ENCODE measurements at regions of chr1 and their contacts with region 1.

Region 1: DNA sequence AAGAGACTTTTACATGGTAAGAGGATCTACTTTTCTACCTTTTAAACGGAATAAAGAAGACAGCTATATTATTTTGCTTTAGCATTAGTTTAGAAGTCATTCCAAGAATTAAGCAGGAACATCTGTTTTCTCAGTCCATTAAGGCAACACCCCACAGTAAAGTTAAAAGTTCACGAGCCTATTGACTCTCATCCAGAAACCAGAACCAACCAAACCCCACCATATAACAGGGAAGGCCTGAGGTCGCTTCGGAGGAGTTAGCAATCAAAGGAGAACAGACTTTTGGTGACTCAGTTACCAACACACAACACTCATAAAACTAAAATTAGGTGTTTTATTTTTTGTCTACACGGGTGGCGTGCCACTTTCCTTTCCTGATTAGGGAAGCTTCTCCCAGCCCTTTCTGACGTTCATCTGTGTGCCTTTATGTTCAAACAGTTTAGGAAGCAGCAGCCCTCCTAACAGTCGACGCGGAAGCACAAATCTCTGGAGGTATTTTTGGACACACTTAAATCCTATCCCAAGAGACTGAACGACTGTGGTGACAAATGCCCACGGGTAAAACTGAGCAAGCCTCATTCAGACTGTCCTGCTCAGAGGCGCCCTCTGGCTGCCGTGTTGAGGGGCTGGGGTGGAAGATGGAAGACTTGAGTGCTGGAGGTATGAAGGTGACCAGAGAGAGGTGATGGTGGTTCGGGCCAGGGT is 8.6 kb upstream of the PLA2G2C start:
- DNase-seq: peak; percentile 13
- ATAC-seq: peak; percentile 91
- H3K4me3 ChIP-seq: no peak overlapping the region
- H3K27ac ChIP-seq: no peak overlapping the region
- H3K4me1 ChIP-seq: no peaks in the 10 kb centered on the region
- H3K27me3 ChIP-seq: peaks cover 0 to 5% of the 10 kb centered on the region in 2 experiments; a peak in 2 of 4 replicates
- CTCF ChIP-seq: peak; percentile 80 to 98 (median 93)
- EP300 ChIP-seq: no peak
- POLR2A ChIP-seq: no peak
- RAD21 ChIP-seq: peak; percentile 78

Region 2: DNA sequence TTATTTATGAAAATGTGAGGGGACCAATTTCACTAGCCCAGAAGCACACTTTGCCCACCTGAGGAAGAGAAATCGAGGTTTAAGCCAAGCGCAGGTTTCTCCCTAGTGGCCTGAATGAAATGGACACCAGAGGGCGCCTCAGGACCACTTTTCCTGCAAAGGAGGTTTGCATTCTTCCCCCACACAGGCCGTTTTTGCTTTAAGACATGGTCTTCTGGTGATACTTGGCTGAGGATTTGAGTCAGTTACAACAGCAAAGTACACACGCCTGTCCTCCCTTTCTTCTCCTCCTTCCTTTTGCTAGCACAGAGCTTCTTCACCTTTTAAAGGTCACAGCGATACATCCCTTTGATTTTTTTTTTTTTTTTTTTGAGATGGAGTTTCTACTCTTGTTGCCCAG is 276.9 kb before region 1 on chr1:
- CTCF ChIA-PET with region 1: interaction called, 52 read pairs
- POLR2A ChIA-PET with region 1: no interaction called
- RAD21 ChIA-PET with region 1: interaction called, 5 read pairs
- SMC1A ChIA-PET with region 1: interaction called, 7 read pairs
- in situ Hi-C with region 1: loop called (anchors 5 kb)
- intact Hi-C with region 1: loop called (anchors 1 kb)
- DNase-seq: peak; percentile 33
- ATAC-seq: peak; percentile 94
- H3K4me3 ChIP-seq: no peak overlapping the region
- H3K27ac ChIP-seq: no peak overlapping the region
- H3K4me1 ChIP-seq: no peaks in the 10 kb centered on the region
- H3K27me3 ChIP-seq: no peaks in the 10 kb centered on the region
- CTCF ChIP-seq: peak; percentile 80 to 98 (median 91); a peak in 5 of 6 replicates
- EP300 ChIP-seq: no peak
- POLR2A ChIP-seq: no peak
- RAD21 ChIP-seq: peak; percentile 98

Region 3: DNA sequence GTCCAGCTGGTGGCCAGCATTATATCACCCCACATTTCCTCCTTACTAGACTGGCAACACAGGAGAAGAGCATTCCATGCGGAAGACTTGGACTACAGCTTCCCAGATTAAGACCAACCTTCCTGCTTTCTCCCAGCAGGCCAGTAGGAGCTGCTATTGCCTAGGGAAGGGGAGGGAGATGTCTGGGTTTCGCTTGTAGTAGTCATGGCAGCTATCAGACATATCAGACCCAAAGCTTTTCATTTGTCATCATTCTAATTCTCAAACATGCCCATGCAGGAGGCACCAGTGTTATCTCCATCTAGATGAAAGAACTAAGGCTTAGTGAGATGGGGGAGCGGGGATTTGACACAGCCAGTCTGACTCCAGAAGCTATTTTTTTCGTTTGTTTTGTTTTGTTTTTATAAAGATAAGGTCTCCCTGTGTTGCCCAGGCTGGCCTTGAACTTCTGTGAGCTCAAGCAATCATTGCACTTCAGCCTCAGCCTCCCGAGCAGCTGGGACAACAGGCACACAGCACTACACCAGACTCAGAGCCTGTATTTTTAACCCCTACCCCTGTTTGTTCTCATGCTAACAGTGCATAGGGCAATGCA is 220.0 kb before region 1 on chr1:
- CTCF ChIA-PET with region 1: interaction called, 3 read pairs
- POLR2A ChIA-PET with region 1: no interaction called
- RAD21 ChIA-PET with region 1: no interaction called
- SMC1A ChIA-PET with region 1: interaction called, 5 read pairs
- in situ Hi-C with region 1: no loop called
- intact Hi-C with region 1: loop called (anchors 10 kb)
- DNase-seq: no peak
- ATAC-seq: no peak
- H3K4me3 ChIP-seq: no peak overlapping the region
- H3K27ac ChIP-seq: no peak overlapping the region
- H3K4me1 ChIP-seq: no peaks in the 10 kb centered on the region
- H3K27me3 ChIP-seq: no peaks in the 10 kb centered on the region; a peak in 1 of 4 replicates
- CTCF ChIP-seq: peak; percentile 71 to 77 (median 73)
- EP300 ChIP-seq: no peak
- POLR2A ChIP-seq: no peak
- RAD21 ChIP-seq: peak; percentile 92

Region 4: GRCh38 chr1:20100632-20101355 is 94.1 kb before region 1 on chr1:
- CTCF ChIA-PET with region 1: interaction called, 32 read pairs
- POLR2A ChIA-PET with region 1: no interaction called
- RAD21 ChIA-PET with region 1: interaction called, 6 read pairs
- SMC1A ChIA-PET with region 1: interaction called, 12 read pairs
- in situ Hi-C with region 1: no loop called
- intact Hi-C with region 1: loop called (anchors 1 kb)
- DNase-seq: no peak
- ATAC-seq: peak; percentile 97
- H3K4me3 ChIP-seq: no peak overlapping the region
- H3K27ac ChIP-seq: no peak overlapping the region
- H3K4me1 ChIP-seq: no peaks in the 10 kb centered on the region
- H3K27me3 ChIP-seq: no peaks in the 10 kb centered on the region
- CTCF ChIP-seq: peak; percentile 84 to 90 (median 86)
- EP300 ChIP-seq: no peak
- POLR2A ChIP-seq: no peak
- RAD21 ChIP-seq: peak; percentile 94

Region 5: DNA sequence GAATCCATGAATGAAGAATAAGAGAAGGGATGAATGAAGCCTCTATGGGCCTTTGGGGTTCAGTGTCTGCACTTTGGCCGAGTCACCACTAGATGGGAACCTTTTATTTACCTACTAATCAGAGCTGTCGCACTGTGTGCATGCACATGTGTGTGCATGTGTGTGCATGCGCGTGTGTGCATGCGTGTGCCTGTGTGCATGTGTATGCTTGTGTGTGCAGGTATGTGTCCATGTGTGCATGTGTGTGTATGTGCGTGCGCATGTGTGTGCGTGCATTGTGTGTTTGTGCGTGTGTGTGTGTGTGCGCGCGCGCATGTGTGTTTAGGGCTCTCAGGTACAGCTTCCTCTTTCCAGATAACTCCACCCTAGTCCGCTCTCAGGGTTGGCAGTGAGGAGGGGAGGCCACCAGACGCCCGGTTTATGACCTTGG is 29.4 kb before region 1 on chr1:
- CTCF ChIA-PET with region 1: interaction called, 10 read pairs
- POLR2A ChIA-PET with region 1: no interaction called
- RAD21 ChIA-PET with region 1: no interaction called
- SMC1A ChIA-PET with region 1: interaction called, 8 read pairs
- in situ Hi-C with region 1: no loop called
- intact Hi-C with region 1: loop called (anchors 1 kb)
- DNase-seq: no peak
- ATAC-seq: peak; percentile 72
- H3K4me3 ChIP-seq: no peak overlapping the region
- H3K27ac ChIP-seq: no peak overlapping the region
- H3K4me1 ChIP-seq: no peaks in the 10 kb centered on the region
- H3K27me3 ChIP-seq: no peaks in the 10 kb centered on the region; a peak in 2 of 4 replicates
- CTCF ChIP-seq: peak; percentile 27 to 55 (median 46); a peak in 3 of 6 replicates
- EP300 ChIP-seq: no peak
- POLR2A ChIP-seq: no peak
- RAD21 ChIP-seq: peak; percentile 34; the same call in 1 of the 2 replicates

Region 6: GRCh38 chr1:20178634-20179370 is 16.1 kb before region 1 on chr1:
- CTCF ChIA-PET with region 1: interaction called, 20 read pairs
- POLR2A ChIA-PET with region 1: no interaction called
- RAD21 ChIA-PET with region 1: no interaction called
- SMC1A ChIA-PET with region 1: interaction called, 7 read pairs
- in situ Hi-C with region 1: no loop called
- intact Hi-C with region 1: no loop called
- DNase-seq: no peak
- ATAC-seq: no peak
- H3K4me3 ChIP-seq: no peak overlapping the region
- H3K27ac ChIP-seq: no peak overlapping the region
- H3K4me1 ChIP-seq: no peaks in the 10 kb centered on the region
- H3K27me3 ChIP-seq: peaks cover 0 to 2% of the 10 kb centered on the region in 2 experiments; a peak in 2 of 4 replicates
- CTCF ChIP-seq: no peak
- EP300 ChIP-seq: no peak
- POLR2A ChIP-seq: no peak
- RAD21 ChIP-seq: no peak

Region 7: DNA sequence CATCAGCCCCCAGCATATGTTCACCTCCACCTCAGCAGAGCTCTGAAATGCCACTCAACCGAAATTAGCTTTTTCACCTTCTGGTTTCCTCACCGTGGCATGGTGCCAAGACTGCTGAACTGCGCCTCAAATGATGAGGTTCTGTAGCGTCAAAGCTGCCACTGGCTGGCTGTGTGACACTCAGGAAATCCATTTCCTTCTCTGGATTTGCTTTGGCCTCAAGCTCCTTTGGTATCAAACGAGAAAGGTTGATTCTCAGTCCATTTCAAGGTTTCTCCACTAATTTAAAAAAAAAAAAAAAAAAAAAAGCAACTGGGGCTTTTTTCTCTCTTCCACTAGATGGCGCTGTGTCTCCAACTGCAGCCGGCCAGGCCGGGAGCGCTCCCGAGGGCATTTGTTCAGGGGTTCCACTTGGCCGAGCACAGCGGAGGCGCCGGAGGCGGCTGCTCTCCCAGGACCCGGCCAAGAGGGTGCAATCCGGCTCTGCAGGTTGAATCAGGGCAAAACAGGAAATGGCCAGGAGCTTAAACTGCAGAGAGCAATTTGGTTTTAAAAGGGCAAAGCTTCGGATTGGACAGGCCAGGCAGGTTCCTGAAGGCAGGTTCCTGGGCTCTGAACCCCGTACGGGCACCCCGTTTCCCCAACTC is 17.9 kb after region 1 on chr1:
- CTCF ChIA-PET with region 1: interaction called, 12 read pairs
- POLR2A ChIA-PET with region 1: no interaction called
- RAD21 ChIA-PET with region 1: no interaction called
- SMC1A ChIA-PET with region 1: no interaction called
- in situ Hi-C with region 1: no loop called
- intact Hi-C with region 1: no loop called
- DNase-seq: no peak
- ATAC-seq: peak; percentile 89
- H3K4me3 ChIP-seq: no peak overlapping the region
- H3K27ac ChIP-seq: no peak overlapping the region
- H3K4me1 ChIP-seq: no peaks in the 10 kb centered on the region; the same call in 1 of the 2 replicates
- H3K27me3 ChIP-seq: peaks cover 3 to 10% of the 10 kb centered on the region in 2 experiments; a peak in 2 of 4 replicates
- CTCF ChIP-seq: peak; percentile 67 to 72 (median 71)
- EP300 ChIP-seq: no peak
- POLR2A ChIP-seq: no peak
- RAD21 ChIP-seq: peak; percentile 77

Measured in GM12878 (cell line).